Ovary (tissue), 10 donors: ENCODE measurements at regions of chr19 and their contacts with region 1.

Region 1: DNA sequence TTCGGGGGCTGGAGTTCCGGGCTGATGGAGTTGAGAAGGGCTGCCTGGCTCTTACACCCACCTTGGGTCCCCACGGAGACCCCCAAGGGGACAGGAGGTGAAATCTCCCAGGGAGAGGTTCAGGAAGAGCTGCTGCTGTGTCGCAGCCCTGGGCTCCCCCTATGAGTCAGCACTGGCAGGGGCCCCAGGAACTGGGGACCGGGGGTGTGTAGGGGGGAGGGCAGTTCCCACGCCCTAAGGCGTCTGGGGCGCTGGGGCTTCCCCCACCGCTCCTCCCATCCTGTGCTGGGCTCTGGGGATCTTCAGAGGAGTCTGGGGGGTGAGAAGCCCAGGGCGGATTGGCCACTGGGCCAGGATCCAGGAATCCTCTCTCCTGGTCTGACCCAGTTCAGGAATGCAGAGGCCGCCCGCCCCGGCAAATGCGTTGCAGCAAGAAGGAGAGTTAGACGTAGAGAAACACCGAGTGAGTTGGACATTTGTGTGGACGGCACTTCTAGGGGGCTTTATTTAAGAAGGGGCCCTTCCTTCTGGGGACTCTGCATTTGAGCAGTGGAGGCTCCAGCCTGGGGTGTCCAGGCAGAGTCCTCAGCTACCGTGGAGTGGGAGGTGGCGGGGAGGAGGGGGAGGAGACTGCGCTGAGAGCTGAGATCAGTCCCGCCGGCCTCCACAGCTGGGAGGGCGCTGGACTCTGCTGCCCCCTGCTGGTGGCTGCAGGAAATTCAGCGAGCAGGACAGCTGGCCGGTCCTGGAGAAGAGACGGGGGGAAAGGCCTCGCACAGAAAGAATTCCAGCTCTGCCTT is 15.0 kb upstream of the NANOS3 start:
- DNase-seq: peak; percentile 93 to 98 (median 96)
- H3K4me3 ChIP-seq: peak overlapping the region; percentile 30
- H3K27ac ChIP-seq: peak overlapping the region; percentile 76 to 77
- H3K4me1 ChIP-seq: no peaks in the 10 kb centered on the region
- H3K27me3 ChIP-seq: no peaks in the 10 kb centered on the region
- CTCF ChIP-seq: peak; percentile 97 to 99 (median 98)
- EP300 ChIP-seq: no peak
- POLR2A ChIP-seq: peak; percentile 48

Region 2: DNA sequence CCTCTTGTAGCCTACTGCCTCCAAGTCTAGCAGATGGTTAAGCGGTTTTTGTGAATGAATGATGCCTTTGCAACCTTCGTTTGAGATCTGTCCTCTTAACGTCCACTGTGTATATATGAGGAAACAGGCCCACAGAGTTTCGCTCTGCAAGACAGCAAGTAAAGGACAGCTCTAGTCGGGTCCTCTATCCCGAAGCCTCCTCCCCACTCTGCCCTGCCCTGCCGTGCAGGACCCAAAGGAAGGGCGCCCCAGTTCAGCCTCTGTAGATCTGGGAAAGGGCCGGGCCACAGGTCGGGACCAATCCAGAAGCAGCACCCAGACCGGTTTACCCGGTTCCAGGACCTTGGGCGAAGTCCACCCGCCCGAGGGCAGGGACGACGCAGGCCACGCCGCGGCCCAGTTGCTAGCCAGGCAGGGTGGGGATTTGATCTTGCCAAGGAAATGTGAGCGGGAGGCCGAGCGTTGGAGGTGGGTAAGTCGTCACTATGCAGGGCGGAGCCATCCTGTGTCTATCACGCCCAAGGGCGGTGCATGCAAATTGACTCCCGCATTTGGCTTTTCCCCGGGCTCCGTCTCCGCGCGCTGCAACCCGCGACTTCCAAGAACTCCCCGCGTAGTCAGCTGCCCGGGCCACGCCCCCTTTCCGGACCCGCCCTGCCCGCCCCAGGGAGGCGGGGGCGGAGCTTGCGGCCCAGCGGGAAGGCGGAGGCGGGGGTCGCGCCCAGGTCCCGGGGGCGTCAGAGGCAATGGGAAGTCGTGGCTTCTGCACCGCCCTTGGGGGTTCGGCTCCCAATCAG is 699.2 kb before region 1 on chr19:
- intact Hi-C with region 1: loop called in 1 of 4 experiments (anchors 10 kb)
- DNase-seq: peak; percentile 96 to 98 (median 97)
- H3K4me3 ChIP-seq: peak overlapping the region; percentile 41
- H3K27ac ChIP-seq: peak overlapping the region; percentile 71 to 73
- H3K4me1 ChIP-seq: peaks cover 7% of the 10 kb centered on the region
- H3K27me3 ChIP-seq: no peaks in the 10 kb centered on the region
- CTCF ChIP-seq: no peak
- EP300 ChIP-seq: peak; percentile 83
- POLR2A ChIP-seq: peak; percentile 47

Region 3: DNA sequence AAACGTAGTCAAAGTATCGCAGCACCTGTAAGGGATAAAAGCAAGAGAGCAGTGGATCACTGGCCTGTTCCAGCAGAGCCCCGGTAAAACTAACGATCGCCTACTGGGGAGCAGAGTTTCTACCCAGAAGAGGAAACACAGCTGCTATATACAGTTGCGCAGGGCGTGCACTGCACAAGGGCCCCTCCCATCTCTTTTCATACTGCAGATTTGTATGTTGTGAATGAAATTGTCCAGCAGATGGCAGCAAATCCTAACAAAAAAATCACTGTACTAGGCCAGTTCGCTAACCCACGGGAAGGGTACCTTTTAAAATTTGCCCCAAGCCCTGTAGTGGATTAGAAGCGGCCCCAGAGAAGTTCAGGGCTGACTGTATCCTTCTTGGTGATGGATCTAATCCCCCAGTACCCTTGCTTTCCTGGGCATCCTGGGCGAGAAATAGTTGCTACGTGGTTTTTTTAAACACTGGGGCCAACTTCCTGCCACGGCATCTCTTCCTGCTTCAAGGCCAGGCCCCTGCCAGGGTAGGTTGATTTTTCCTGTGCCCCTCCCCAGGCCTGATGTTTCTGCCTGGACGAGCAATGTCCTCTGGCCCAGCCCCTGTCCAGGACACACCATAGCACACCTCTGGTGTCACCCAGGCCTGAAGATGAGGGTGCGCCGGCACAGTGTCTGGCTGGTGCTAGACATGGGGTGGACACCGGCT is 584.7 kb before region 1 on chr19:
- intact Hi-C with region 1: loop called in 2 of 4 experiments (anchors 5 to 10 kb)
- DNase-seq: peak; percentile 18 to 49 (median 43)
- H3K4me3 ChIP-seq: no peak overlapping the region
- H3K27ac ChIP-seq: no peak overlapping the region
- H3K4me1 ChIP-seq: no peaks in the 10 kb centered on the region
- H3K27me3 ChIP-seq: no peaks in the 10 kb centered on the region
- CTCF ChIP-seq: peak; percentile 32 to 53 (median 37)
- EP300 ChIP-seq: no peak
- POLR2A ChIP-seq: no peak

Region 4: GRCh38 chr19:13774217-13775191 is 87.4 kb before region 1 on chr19 and contains the start of gene C19orf53:
- intact Hi-C with region 1: loop called in 1 of 4 experiments (anchors 10 kb)
- DNase-seq: peak; percentile 85 to 92 (median 88)
- H3K4me3 ChIP-seq: peak within 1 kb of the TSS; percentile 95
- H3K27ac ChIP-seq: peak within 1 kb of the TSS; percentile 9 to 52
- H3K4me1 ChIP-seq: peaks cover 7% of the 10 kb centered on the region
- H3K27me3 ChIP-seq: no peaks in the 10 kb centered on the region
- CTCF ChIP-seq: peak in 1 of 3 donors; percentile 10
- EP300 ChIP-seq: no peak
- POLR2A ChIP-seq: peak; percentile 93
- total RNA-seq, gene C19orf53: 76.4 to 298 (median 91.3) TPM

Region 5: DNA sequence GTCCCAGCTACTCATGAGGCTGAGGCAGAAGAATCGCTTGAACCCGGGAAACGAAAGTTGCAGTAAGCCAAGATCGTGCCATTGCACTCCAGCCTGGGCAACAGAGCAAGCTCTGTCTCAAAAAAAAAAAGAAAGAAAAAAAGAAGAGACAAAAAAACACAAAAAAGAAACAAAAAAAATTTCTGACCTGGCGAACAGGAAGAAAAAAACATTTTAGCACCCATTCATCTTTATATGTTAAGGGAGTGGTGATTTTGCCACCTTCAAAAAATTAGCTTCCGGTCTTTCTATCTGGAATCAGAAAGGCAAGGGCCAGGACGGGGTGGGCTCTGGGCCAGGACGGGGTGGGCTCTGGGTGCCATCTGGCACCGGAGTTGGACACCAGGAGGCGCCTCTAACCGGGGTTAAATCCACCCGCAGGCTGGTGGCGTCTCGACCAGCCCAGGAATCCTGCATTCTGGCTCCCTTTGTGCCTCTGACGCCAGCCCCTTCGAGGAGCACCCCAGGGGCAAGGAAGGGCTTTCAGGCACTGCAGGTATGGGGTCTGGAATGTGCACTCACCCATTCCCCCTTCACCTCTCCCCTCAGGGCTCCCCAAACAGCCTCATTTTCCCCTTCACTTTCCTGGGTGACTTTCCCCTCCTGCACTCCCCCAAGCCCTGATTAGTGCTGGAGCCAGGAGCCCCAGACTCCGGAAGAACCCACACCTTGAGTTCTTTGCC is 77.0 kb before region 1 on chr19:
- intact Hi-C with region 1: loop called in 3 of 4 experiments (anchors 2 to 5 kb)
- DNase-seq: peak; percentile 62 to 84 (median 75)
- H3K4me3 ChIP-seq: no peak overlapping the region
- H3K27ac ChIP-seq: no peak overlapping the region
- H3K4me1 ChIP-seq: peaks cover 3% of the 10 kb centered on the region
- H3K27me3 ChIP-seq: no peaks in the 10 kb centered on the region
- CTCF ChIP-seq: peak in 1 of 3 donors; percentile 39
- EP300 ChIP-seq: no peak
- POLR2A ChIP-seq: no peak

Region 6: DNA sequence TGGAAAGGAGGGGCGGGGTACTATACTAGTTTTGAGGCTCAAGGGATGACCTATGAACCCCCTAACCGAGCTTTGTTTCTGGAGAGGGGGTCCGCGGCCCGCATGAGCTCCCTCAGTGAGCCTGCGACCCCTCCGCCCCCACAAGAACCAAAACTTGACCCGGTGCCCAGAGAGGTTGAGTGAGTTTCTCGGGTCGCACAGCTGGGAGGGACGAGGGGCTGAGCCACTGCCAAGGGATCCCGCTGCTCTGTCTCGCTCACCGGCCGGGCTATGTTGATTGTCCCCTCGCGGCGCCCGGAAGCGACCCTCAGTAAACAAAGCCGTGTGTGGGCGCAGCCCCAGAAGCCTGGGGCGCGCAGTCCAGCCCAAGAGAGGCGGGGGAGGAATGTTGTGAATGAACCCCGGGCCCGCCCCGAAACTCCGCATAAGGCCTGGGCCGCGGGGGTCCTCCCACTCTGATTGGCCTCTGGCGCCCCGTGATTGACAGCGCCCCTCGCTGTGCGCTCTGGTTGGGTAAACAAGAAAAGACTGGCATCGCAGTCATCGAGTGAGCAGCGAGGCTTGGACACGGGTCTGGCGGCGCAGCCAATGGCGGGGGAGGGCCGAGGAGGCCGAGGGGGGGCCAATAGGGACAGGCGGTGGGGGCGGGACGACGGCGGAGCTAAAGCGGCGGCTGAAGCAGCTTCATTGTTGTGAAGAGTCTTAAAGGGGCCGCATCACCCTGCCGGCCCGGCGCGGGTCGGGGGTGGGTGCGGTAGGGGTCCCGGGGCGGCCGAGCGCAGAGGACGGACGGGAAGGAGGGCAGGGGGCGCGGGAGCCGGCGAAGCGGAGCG is 67.0 kb before region 1 on chr19 and contains the start of gene ZSWIM4:
- intact Hi-C with region 1: loop called in 2 of 4 experiments (anchors 5 to 10 kb)
- DNase-seq: peak; percentile 97 to 99 (median 99)
- H3K4me3 ChIP-seq: peak within 1 kb of the TSS; percentile 86
- H3K27ac ChIP-seq: peak within 1 kb of the TSS; percentile 67 to 74
- H3K4me1 ChIP-seq: peaks cover 2% of the 10 kb centered on the region
- H3K27me3 ChIP-seq: no peaks in the 10 kb centered on the region
- CTCF ChIP-seq: no peak
- EP300 ChIP-seq: no peak
- POLR2A ChIP-seq: peak; percentile 55
- total RNA-seq, gene ZSWIM4: 2.6 to 7.9 (median 4.6) TPM

Region 7: DNA sequence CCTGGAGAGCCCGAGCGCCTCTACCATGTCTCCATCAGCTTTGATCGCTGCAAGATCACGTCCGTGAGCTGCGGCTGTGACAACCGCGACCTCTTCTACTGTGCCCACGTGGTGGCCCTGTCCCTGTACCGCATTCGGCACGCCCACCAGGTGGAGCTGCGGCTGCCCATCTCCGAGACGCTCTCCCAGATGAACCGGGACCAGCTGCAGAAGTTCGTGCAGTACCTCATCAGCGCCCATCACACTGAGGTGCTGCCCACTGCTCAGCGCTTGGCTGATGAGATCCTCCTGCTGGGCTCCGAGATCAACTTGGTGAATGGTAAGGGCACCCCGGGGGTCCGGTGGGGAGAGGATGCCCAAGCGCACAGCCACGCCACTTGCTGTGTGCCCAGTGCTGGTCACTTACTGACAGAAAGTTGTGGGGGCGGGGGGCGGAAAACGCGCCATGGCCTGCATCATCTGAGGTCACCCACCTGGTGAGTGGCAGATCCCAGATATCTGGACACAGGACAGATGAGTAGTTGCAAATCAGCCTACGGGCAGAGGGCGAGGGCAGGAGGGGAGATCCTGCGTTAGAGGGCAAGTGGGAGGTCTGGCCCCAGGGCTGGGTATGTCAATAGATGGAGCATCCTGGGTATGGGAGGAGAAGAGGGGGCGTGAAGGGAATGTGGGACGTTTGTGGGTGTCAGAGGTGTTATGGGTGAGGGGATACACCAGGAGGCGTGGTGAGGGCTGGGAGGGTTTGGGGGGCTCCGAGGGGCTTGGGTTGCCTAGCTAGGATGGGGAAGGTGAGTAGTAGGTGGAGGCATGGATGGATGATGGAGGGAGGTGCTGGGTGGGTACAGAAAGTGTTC is 56.9 kb before region 1 on chr19:
- intact Hi-C with region 1: loop called in 1 of 4 experiments (anchors 10 kb)
- DNase-seq: no peak
- H3K4me3 ChIP-seq: no peak overlapping the region
- H3K27ac ChIP-seq: no peak overlapping the region
- H3K4me1 ChIP-seq: no peaks in the 10 kb centered on the region
- H3K27me3 ChIP-seq: no peaks in the 10 kb centered on the region
- CTCF ChIP-seq: peak in 1 of 3 donors; percentile 27
- EP300 ChIP-seq: no peak
- POLR2A ChIP-seq: no peak

Region 8: GRCh38 chr19:13817615-13818371 is 44.1 kb before region 1 on chr19:
- intact Hi-C with region 1: no loop called
- DNase-seq: no peak
- H3K4me3 ChIP-seq: no peak overlapping the region
- H3K27ac ChIP-seq: no peak overlapping the region
- H3K4me1 ChIP-seq: no peaks in the 10 kb centered on the region
- H3K27me3 ChIP-seq: no peaks in the 10 kb centered on the region
- CTCF ChIP-seq: no peak
- EP300 ChIP-seq: no peak
- POLR2A ChIP-seq: no peak